ENCODE measurements at regions of chr10 and their contacts with region 1.

Region 1: GRCh38 chr10:5623081-5623748 is 43.2 kb downstream of the ASB13 start:
- DNase-seq: peak; percentile 96

Region 2: GRCh38 chr10:5434017-5434753 is 189.0 kb before region 1 on chr10:
- intact Hi-C with region 1: loop called in 1 of 2 experiments (anchors 2 kb)
- DNase-seq: no peak

Region 3: DNA sequence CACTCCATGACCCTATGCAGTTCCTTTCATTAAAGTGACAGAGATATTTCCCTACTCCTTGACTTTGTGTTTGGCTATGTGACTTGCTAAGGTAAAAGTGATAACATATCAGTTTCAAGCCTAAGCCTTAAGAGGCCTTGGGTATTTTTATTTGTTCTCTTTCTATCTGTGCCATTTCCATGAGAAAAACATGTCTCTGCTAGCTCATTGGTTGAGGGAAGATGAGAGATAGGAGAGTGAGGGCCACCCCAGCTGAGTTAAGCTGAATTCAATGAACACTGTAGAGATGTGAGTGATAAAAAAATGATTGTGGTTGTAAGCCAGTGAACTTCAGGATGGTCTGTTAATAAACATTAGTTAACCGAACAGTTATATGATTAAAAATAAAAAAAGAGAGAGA is 74.8 kb after region 1 on chr10:
- intact Hi-C with region 1: no loop called
- DNase-seq: no peak

Measured in posterior vena cava (tissue), 2 donors.